HepG2 (cell line): ENCODE measurements at regions of chr1 and their contacts with region 1.

Region 1: DNA sequence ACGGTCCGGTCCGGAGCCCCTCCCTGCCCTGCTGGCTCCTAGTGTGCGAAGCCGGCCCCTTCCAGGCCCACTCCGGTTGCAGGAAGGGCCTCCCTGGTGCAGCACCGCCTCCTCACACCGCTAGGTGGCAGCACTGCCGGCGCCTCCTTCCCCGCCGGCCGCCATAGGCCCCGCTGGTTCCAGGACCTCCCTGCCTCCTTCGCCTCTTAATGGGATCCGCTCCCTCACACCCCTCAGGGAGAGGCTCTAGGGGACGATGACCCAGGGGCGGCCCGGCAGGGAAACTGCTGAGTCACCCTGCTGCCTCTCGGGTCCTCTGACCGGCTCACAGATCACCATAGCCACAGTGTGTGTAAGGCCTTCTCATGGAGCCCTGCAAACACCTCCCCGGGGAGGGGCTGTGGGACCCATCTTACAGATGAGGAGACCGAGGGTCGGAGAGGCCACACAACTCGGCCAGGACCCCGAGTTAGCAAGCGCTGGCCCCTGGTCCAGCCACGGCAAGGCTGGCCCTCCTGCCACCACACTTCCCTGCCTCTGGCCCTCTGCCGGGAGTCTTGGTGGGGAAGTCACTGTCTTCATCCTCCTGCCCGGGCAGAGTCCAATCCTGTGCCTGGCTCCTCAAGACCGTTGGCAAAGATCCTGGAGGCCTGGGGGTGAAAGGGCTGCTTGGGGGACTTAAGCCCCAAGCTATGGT is 1.6 kb upstream of the AJAP1 start:
- DNase-seq: peak; percentile 16
- ATAC-seq: peak; percentile 90
- H3K4me3 ChIP-seq: no peak overlapping the region
- H3K27ac ChIP-seq: no peak overlapping the region
- H3K4me1 ChIP-seq: no peaks in the 10 kb centered on the region
- H3K27me3 ChIP-seq: peaks cover 0 to 19% of the 10 kb centered on the region in 2 experiments; a peak in 4 of 5 replicates
- CTCF ChIP-seq: peak; percentile 88
- EP300 ChIP-seq: no peak
- POLR2A ChIP-seq: no peak
- RAD21 ChIP-seq: peak; percentile 57; the same call in 1 of the 2 replicates

Region 2: GRCh38 chr1:4741876-4742423 is 89.2 kb after region 1 on chr1:
- CTCF ChIA-PET with region 1: no interaction called
- POLR2A ChIA-PET with region 1: no interaction called
- in situ Hi-C with region 1: no loop called
- intact Hi-C with region 1: loop called (anchors 2 kb)
- DNase-seq: no peak
- ATAC-seq: 0 out of 3 replicates have a peak, but pooled peaks have one; percentile 44
- H3K4me3 ChIP-seq: no peak overlapping the region
- H3K27ac ChIP-seq: no peak overlapping the region
- H3K4me1 ChIP-seq: no peaks in the 10 kb centered on the region
- H3K27me3 ChIP-seq: no peaks in the 10 kb centered on the region; a peak in 1 of 5 replicates
- CTCF ChIP-seq: peak; percentile 34
- EP300 ChIP-seq: no peak
- POLR2A ChIP-seq: no peak
- RAD21 ChIP-seq: no peak

Region 3: GRCh38 chr1:4825800-4826450 is 173.1 kb after region 1 on chr1:
- CTCF ChIA-PET with region 1: interaction called, 9 read pairs
- POLR2A ChIA-PET with region 1: no interaction called
- in situ Hi-C with region 1: loop called (anchors 10 kb)
- intact Hi-C with region 1: no loop called
- DNase-seq: peak; percentile 25
- ATAC-seq: peak; percentile 77
- H3K4me3 ChIP-seq: no peak overlapping the region
- H3K27ac ChIP-seq: no peak overlapping the region
- H3K4me1 ChIP-seq: no peaks in the 10 kb centered on the region
- H3K27me3 ChIP-seq: 0 out of 5 replicates have a peak, but pooled peaks cover 0 to 5% of the 10 kb centered on the region in 2 experiments
- CTCF ChIP-seq: peak; percentile 73
- EP300 ChIP-seq: no peak
- POLR2A ChIP-seq: no peak
- RAD21 ChIP-seq: no peak